ENCODE measurements at regions of chr11 and their contacts with region 1.

Region 1: DNA sequence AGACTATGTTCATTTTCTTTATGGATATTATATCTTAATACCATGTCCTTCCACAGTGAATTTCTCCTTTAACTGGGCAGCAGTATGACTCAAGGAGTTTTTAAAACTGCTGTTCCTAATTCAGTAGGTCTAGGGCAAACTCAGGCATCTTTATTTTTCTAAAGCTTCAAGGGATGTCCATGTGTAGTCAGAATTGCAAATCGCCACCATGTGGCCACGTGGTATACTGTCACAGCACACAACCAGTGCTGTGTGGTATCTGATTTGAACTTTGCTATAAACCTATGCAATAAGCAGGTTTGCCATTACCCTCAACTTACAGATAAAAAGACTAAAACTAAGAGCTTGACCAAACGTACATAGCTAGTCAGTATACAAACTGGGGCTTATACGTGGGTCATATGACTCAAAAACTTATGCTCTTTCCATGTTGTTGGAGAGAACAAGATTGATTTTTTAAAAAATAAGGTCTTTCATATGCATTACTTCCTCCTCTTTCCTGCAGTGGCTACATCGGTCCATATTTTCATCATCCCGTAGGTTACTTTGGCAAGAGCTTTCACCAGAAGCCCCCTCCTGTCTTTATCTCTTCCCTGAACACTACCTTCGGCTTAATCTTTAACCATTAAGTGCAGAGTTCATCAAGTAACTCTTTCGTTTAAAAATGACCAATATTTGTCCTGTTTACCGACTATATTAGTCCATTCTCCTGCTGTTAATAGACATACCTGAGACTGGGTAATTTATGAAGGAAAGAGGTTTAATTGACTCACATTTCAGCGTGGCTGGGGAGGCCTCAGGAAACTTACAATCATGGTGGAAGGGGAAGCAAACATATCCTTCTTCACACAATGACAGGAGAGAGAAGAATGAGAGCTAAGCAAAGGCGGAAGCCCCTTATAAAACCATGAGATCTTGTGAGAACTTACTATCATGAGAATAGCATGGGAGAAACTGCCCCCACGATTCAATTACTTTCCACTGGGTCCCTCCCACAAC is 8.0 kb upstream of the HTATIP2 start:
- DNase-seq: peak; percentile 62
- ATAC-seq: peak; percentile 83
- H3K4me3 Mint-ChIP-seq: no peak overlapping the region
- H3K27ac Mint-ChIP-seq: no peak overlapping the region
- H3K4me1 Mint-ChIP-seq: peaks cover 4% of the 10 kb centered on the region
- H3K27me3 Mint-ChIP-seq: no peaks in the 10 kb centered on the region
- CTCF ChIP-seq: peak; percentile 39

Region 2: GRCh38 chr11:20283475-20283874 is 72.0 kb before region 1 on chr11:
- CTCF ChIA-PET with region 1: no interaction called
- POLR2A ChIA-PET with region 1: no interaction called
- intact Hi-C with region 1: no loop called
- DNase-seq: no peak
- ATAC-seq: no peak
- H3K4me3 Mint-ChIP-seq: no peak overlapping the region
- H3K27ac Mint-ChIP-seq: no peak overlapping the region
- H3K4me1 Mint-ChIP-seq: no peaks in the 10 kb centered on the region
- H3K27me3 Mint-ChIP-seq: peaks cover 1% of the 10 kb centered on the region
- CTCF ChIP-seq: no peak

Region 3: GRCh38 chr11:20310137-20310536 is 45.4 kb before region 1 on chr11:
- CTCF ChIA-PET with region 1: no interaction called
- POLR2A ChIA-PET with region 1: no interaction called
- intact Hi-C with region 1: no loop called
- DNase-seq: no peak
- ATAC-seq: no peak
- H3K4me3 Mint-ChIP-seq: no peak overlapping the region
- H3K27ac Mint-ChIP-seq: no peak overlapping the region
- H3K4me1 Mint-ChIP-seq: no peaks in the 10 kb centered on the region
- H3K27me3 Mint-ChIP-seq: peaks cover 4% of the 10 kb centered on the region
- CTCF ChIP-seq: no peak

Region 4: GRCh38 chr11:20337526-20338154 is 17.9 kb before region 1 on chr11:
- CTCF ChIA-PET with region 1: interaction called, 45 read pairs
- POLR2A ChIA-PET with region 1: no interaction called
- intact Hi-C with region 1: no loop called
- DNase-seq: peak; percentile 36
- ATAC-seq: no peak
- H3K4me3 Mint-ChIP-seq: no peak overlapping the region
- H3K27ac Mint-ChIP-seq: no peak overlapping the region
- H3K4me1 Mint-ChIP-seq: peaks cover 3% of the 10 kb centered on the region
- H3K27me3 Mint-ChIP-seq: peaks cover 49% of the 10 kb centered on the region
- CTCF ChIP-seq: peak; percentile 55

Region 5: DNA sequence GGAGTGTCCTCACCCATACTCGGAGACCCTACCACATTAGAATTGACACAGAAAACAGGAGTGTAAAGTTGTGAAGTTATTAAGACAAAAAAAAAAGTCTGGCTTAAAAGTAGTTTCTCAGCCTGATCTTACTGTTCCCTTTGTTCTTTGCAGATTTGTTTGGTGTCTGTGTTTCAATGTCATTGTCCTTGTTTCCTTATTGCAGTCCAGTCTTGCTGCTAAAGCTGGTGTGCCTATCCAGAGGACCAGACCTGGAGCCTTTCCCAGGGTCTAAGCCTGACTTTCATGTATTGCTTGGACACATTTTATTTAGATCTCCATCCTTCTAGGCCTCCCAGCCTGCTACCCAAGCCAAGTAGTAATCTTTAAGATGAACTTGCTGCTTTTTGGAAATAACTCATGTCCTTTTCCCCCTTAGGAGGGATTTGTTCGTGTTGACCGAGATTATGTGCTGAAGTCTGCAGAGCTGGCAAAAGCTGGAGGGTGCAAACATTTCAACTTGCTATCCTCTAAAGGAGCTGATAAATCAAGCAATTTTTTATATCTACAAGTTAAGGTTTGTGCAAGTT is 20.7 kb after region 1 on chr11:
- CTCF ChIA-PET with region 1: interaction called, 16 read pairs
- POLR2A ChIA-PET with region 1: no interaction called
- intact Hi-C with region 1: no loop called
- DNase-seq: no peak
- ATAC-seq: no peak
- H3K4me3 Mint-ChIP-seq: no peak overlapping the region
- H3K27ac Mint-ChIP-seq: no peak overlapping the region
- H3K4me1 Mint-ChIP-seq: peaks cover 9% of the 10 kb centered on the region
- H3K27me3 Mint-ChIP-seq: no peaks in the 10 kb centered on the region
- CTCF ChIP-seq: no peak

Region 6: GRCh38 chr11:20421946-20422345 is 66.4 kb after region 1 on chr11:
- CTCF ChIA-PET with region 1: no interaction called
- POLR2A ChIA-PET with region 1: no interaction called
- intact Hi-C with region 1: no loop called
- DNase-seq: no peak
- ATAC-seq: peak; percentile 39
- H3K4me3 Mint-ChIP-seq: no peak overlapping the region
- H3K27ac Mint-ChIP-seq: no peak overlapping the region
- H3K4me1 Mint-ChIP-seq: peaks cover 8% of the 10 kb centered on the region
- H3K27me3 Mint-ChIP-seq: no peaks in the 10 kb centered on the region
- CTCF ChIP-seq: no peak